HepG2 (cell line): ENCODE measurements at regions of chr1 and their contacts with region 1.

Region 1: GRCh38 chr1:41241782-41242341 is at the start of gene SCMH1:
- DNase-seq: no peak
- ATAC-seq: peak; percentile 53
- H3K4me3 ChIP-seq: peak within 1 kb of the TSS; percentile 54 to 78 (median 73)
- H3K27ac ChIP-seq: peak within 1 kb of the TSS; percentile 89
- H3K4me1 ChIP-seq: peaks cover 82% of the 10 kb centered on the region
- H3K27me3 ChIP-seq: no peaks in the 10 kb centered on the region
- CTCF ChIP-seq: no peak
- EP300 ChIP-seq: no peak
- POLR2A ChIP-seq: 0 out of 4 replicates have a peak, but pooled peaks of 1 of the 2 experiments have one; percentile 25
- RAD21 ChIP-seq: no peak
- total RNA-seq, gene SCMH1: 35.5 and 41.8 TPM in 2 replicates

Region 2: DNA sequence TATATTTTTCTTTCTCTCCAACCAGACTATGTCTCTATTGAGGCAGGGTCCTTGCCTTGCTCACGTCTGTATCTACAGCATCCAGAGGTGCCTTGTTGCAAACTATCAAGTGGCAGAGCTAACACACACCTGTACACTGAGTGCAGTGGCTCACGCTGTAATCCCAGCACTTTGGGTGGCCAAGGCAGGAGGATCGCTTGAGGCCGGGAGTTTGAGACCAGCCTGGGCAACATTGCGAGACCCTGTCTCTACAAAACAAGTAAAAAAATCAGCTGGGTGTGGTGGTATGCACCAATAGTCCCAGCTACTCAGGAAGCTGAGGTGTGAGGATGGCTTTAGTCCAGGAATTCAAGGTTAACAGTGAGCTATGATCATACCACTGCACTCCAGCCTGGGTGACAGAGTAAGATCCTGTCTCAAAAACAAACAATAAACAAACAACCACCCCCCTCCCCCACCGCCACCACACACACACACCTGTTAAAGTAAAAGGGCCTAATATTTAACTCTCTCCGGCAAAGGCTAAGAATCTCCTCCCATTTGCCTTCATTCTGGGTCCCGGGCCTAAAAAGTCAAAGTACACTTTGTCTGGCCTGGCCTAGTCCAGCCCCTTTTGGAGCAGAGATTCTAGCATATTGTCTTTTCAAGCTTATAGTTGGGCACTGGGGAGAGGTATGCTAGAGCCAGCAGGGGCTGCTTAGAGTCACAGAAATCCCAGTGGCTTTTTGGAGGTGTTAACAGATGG is 210.8 kb before region 1 on chr1:
- CTCF ChIA-PET with region 1: no interaction called
- POLR2A ChIA-PET with region 1: no interaction called
- in situ Hi-C with region 1: no loop called
- intact Hi-C with region 1: loop called (anchors 2 kb)
- DNase-seq: peak; percentile 55
- ATAC-seq: peak; percentile 78
- H3K4me3 ChIP-seq: no peak overlapping the region
- H3K27ac ChIP-seq: peak overlapping the region; percentile 50
- H3K4me1 ChIP-seq: peaks cover 23% of the 10 kb centered on the region
- H3K27me3 ChIP-seq: no peaks in the 10 kb centered on the region
- CTCF ChIP-seq: no peak
- EP300 ChIP-seq: no peak
- POLR2A ChIP-seq: no peak
- RAD21 ChIP-seq: no peak

Region 3: DNA sequence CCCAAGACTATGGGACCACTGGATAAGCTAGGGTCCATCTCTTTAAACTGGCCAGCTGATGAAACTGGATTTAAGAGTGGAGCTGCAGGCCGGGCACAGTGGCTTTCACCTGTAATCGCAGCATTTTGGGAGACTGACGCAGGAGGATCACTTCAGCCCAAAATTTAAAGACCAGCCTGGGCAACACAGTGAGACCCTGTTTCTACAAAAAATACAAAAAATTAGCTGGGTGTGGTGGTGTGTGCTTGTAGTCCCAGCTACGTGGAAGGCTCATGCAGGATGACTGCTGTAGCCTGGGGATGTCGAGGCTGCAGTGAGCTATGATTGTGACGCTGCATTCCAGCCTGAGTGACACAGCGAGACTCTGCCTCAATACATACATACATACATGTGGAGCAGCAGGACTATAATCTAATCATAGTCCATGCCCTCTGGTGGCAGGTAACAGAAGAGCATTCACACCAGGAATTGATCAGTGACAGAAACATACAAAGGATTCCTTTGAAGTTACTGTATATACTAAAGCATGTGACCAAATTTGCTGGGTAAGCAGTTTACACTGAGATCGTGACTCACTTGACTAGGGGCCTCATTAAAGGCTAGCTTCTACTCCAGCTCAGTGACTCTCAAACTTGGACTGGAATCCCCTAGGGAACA is 118.9 kb before region 1 on chr1:
- CTCF ChIA-PET with region 1: no interaction called
- POLR2A ChIA-PET with region 1: no interaction called
- in situ Hi-C with region 1: no loop called
- intact Hi-C with region 1: loop called (anchors 2 kb)
- DNase-seq: peak; percentile 86
- ATAC-seq: peak; percentile 98
- H3K4me3 ChIP-seq: no peak overlapping the region
- H3K27ac ChIP-seq: peak overlapping the region; percentile 8
- H3K4me1 ChIP-seq: peaks cover 12% of the 10 kb centered on the region
- H3K27me3 ChIP-seq: no peaks in the 10 kb centered on the region
- CTCF ChIP-seq: peak; percentile 68
- EP300 ChIP-seq: no peak
- POLR2A ChIP-seq: no peak
- RAD21 ChIP-seq: no peak

Region 4: DNA sequence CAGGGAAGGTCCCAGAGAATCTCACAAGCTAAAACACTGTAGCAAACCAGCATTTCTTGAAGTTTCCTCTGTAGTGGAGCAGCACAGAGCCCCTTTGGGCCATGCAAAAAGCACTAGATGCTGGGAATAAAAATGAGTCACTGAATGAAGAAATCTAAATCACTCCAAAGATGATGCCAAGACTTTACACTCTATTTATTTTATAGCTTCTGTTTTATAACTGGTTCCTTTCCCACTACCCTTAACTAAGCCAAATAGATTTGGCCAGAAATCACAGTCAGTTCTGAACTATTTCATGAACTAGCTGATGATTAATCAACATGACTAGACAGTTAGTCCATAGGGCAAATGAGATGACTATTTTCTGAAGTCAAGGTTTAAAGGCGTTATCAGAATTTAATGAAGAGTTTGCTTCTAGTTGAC is 89.2 kb before region 1 on chr1:
- CTCF ChIA-PET with region 1: no interaction called
- POLR2A ChIA-PET with region 1: interaction called, 16 read pairs
- in situ Hi-C with region 1: no loop called
- intact Hi-C with region 1: loop called (anchors 10 kb)
- DNase-seq: no peak
- ATAC-seq: no peak
- H3K4me3 ChIP-seq: no peak overlapping the region
- H3K27ac ChIP-seq: no peak overlapping the region
- H3K4me1 ChIP-seq: peaks cover 33% of the 10 kb centered on the region
- H3K27me3 ChIP-seq: no peaks in the 10 kb centered on the region
- CTCF ChIP-seq: no peak
- EP300 ChIP-seq: no peak
- POLR2A ChIP-seq: no peak
- RAD21 ChIP-seq: no peak

Region 5: GRCh38 chr1:41200728-41201127 is 41.1 kb before region 1 on chr1:
- CTCF ChIA-PET with region 1: no interaction called
- POLR2A ChIA-PET with region 1: no interaction called
- in situ Hi-C with region 1: no loop called
- intact Hi-C with region 1: no loop called
- DNase-seq: no peak
- ATAC-seq: no peak
- H3K4me3 ChIP-seq: no peak overlapping the region
- H3K27ac ChIP-seq: no peak overlapping the region
- H3K4me1 ChIP-seq: 0 out of 2 replicates have a peak, but pooled peaks cover 7% of the 10 kb centered on the region
- H3K27me3 ChIP-seq: no peaks in the 10 kb centered on the region
- CTCF ChIP-seq: no peak
- EP300 ChIP-seq: no peak
- POLR2A ChIP-seq: no peak
- RAD21 ChIP-seq: no peak